Caco-2 (cell line): ENCODE measurements at regions of chr19 and their contacts with region 1.

Region 1: DNA sequence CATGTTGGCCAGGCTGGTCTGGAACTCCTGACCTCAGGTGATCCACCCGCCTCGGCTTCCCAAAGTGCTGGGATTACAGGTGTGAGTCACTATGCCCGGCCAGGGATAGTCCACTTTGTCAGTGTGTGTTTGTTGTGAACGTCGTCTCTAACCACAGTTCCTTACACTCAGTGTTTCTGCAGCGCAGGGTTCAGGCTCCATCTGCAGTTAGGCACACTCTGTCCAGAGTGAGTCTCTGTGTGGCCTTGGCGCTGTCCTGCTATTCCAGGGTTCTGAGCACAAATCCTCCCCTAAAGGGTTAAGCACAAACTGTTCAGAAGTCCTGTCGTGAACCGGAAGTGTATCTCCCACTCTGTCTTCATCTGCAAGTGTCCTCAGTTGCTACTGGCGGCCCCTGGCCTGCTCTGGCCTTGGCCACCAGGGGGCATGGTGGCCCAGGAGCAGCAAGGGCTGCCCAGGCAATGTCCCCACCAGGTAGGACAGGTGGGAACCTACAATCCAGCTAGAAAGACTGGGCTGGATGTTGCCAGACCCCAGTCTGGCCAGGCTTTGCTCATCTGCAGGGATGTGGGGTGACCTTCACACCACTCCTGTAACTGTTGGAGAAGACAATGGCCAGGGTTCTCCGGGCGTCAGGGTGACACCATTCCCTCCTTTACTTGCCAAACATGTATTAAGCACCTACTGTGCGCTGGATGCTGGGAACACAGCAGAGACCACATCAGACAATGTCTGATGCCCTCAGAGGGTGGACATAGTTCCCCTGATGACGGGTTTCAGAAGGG is 38.7 kb upstream of the GATAD2A start:
- DNase-seq: peak; percentile 90 to 93
- H3K4me3 ChIP-seq: no peak overlapping the region
- H3K4me3 Mint-ChIP-seq: no peak overlapping the region
- H3K27ac Mint-ChIP-seq: peak overlapping the region; percentile 55
- H3K4me1 ChIP-seq: peaks cover 7% of the 10 kb centered on the region
- H3K4me1 Mint-ChIP-seq: peaks cover 7% of the 10 kb centered on the region
- H3K27me3 ChIP-seq: no peaks in the 10 kb centered on the region; the same call in 1 of the 2 replicates
- H3K27me3 Mint-ChIP-seq: no peaks in the 10 kb centered on the region
- CTCF ChIP-seq: peak; percentile 80 to 94

Region 2: GRCh38 chr19:19377258-19377657 is 10.5 kb after region 1 on chr19:
- CTCF ChIA-PET with region 1: interaction called, 8 read pairs
- POLR2A ChIA-PET with region 1: interaction called, 3 read pairs
- intact Hi-C with region 1: loop called (anchors 1 kb)
- DNase-seq: no peak
- H3K4me3 ChIP-seq: no peak overlapping the region
- H3K4me3 Mint-ChIP-seq: peak overlapping the region; percentile 85
- H3K27ac Mint-ChIP-seq: peak overlapping the region; percentile 98
- H3K4me1 ChIP-seq: peaks cover 35% of the 10 kb centered on the region
- H3K4me1 Mint-ChIP-seq: peaks cover 15% of the 10 kb centered on the region
- H3K27me3 ChIP-seq: no peaks in the 10 kb centered on the region
- H3K27me3 Mint-ChIP-seq: no peaks in the 10 kb centered on the region
- CTCF ChIP-seq: no peak